Cardiac septum (tissue), 1 donor: ENCODE measurements at regions of chr4 and their contacts with region 1.

Region 1: GRCh38 chr4:10554694-10555093 is 97.5 kb upstream of the ZNF518B start:
- DNase-seq: no peak

Region 2: GRCh38 chr4:10403633-10404445 is 150.9 kb before region 1 on chr4:
- intact Hi-C with region 1: loop called (anchors 10 kb)
- DNase-seq: no peak

Region 3: DNA sequence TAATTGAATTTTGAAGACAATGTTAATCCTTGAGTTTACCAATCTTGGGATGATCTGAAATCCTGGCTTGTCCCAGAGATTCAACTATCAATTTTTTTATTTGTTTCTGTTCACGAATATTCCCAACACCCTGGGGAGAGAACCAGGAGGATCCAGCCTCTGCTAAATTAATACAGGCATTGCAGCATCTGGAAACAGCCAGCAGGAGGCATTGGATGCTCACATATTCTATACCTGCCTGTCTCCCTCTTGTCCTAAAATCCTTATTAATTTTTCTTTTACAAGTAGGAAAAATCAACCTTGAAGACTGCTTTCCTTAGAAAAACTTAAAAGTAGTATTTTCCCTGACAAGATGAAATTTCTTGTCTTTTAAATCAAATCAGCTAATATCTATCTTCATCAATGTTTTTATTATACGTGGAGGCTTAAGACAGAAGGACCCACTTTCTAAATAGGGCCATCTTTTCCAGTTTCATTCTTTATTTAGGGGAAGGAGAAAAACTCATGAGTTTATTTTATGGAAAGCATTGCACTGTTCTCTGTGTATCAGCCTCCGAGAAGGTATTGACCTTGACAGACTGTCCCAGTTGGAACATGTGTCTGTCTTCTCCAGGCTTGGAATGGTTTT is 27.5 kb after region 1 on chr4:
- intact Hi-C with region 1: no loop called
- DNase-seq: no peak